BJ (cell line): ENCODE measurements at regions of chr1 and their contacts with region 1.

Region 1: GRCh38 chr1:28552758-28553663 is at the start of gene TRNAU1AP:
- DNase-seq: peak; percentile 66
- H3K4me3 ChIP-seq: peak within 1 kb of the TSS; percentile 88
- H3K27me3 ChIP-seq: no peaks in the 10 kb centered on the region
- CTCF ChIP-seq: no peak
- polyA plus RNA-seq, gene TRNAU1AP: 26.6 and 35.5 TPM in 2 replicates

Region 2: GRCh38 chr1:28480308-28480707 is 72.7 kb before region 1 on chr1:
- CTCF ChIA-PET with region 1: no interaction called
- POLR2A ChIA-PET with region 1: no interaction called
- DNase-seq: no peak
- H3K4me3 ChIP-seq: no peak overlapping the region
- H3K27me3 ChIP-seq: no peaks in the 10 kb centered on the region
- CTCF ChIP-seq: no peak

Region 3: DNA sequence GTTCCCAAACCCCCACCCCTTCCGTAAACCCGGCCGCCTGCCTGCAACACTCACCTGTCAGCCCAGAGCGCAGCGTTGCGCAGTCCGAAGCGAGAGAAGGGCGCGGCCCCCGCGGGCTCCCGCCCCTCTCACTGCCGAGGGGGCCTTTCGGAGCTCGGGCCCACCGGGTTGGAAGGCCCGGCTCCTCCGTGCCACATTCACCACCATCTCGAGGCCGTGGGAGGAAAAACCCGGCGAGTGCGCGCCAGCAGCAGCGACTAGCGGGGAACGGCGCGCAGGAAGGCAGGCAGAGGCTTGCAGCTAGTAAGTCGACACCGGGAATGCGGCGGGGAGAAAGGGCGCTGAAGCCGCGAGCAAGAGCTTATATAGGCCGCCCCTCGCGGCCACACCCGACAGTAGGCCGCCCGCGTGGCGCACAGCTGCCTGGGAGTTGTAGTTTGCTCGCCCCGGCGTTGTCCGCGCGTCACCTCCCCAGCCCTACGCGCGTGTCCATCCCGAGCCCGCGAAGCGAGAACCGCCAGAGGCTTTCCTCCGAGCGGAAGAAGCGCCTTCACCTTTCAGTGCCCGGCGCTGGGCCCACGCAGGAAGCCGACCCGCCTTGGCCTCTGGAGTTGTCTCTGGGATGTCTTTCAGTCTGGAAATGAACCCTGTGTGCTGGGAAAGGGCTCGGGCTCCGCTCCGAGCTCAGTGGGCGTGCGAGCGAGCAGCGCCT is 28.7 kb after region 1 on chr1:
- CTCF ChIA-PET with region 1: interaction called, 8 read pairs
- POLR2A ChIA-PET with region 1: interaction called, 11 read pairs
- DNase-seq: peak; percentile 75
- H3K4me3 ChIP-seq: peak overlapping the region; percentile 93
- H3K27me3 ChIP-seq: no peaks in the 10 kb centered on the region
- CTCF ChIP-seq: no peak

Region 4: DNA sequence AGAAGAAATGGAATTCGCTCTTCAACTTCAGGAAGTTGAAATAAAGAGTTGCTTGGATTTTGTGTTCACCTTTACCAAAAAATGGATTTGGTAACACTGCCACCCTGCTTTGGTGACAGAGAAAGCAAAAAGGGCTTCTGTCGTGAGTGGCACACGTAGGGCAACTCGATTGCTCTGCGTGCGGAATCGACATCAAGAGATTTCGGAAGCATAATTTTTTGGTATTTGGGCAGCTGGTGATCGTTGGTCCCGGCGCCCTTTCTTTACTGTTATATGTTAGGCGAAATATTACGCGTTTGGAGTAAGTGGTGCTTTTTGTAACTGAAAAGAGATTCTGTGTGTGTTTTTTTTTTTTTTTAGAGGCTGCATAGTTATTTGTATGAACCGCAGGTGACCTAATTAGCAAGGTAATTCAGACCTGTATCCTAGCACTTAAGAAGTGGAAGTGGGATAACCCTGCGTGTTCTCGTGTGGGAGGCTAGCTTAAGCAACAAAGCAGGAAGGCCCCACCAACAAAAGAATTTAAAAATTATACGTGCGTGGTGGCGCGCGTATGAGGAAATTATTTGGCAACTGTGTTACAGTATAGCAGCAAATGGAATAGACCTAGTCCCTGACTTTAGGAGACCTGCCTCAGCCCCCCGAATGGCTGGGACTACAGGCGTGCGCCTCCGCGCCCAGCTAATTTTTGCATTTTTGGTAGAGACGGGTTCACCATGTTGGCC is 95.6 kb after region 1 on chr1 and contains the start of gene RNU11:
- CTCF ChIA-PET with region 1: no interaction called
- POLR2A ChIA-PET with region 1: interaction called, 13 read pairs
- DNase-seq: peak; percentile 87
- H3K4me3 ChIP-seq: peak within 1 kb of the TSS; percentile 42
- H3K27me3 ChIP-seq: no peaks in the 10 kb centered on the region
- CTCF ChIP-seq: no peak
- polyA plus RNA-seq, gene RNU11: not detected in 2 replicates